ENCODE measurements at regions of chr14 and their contacts with region 1.

Region 1: DNA sequence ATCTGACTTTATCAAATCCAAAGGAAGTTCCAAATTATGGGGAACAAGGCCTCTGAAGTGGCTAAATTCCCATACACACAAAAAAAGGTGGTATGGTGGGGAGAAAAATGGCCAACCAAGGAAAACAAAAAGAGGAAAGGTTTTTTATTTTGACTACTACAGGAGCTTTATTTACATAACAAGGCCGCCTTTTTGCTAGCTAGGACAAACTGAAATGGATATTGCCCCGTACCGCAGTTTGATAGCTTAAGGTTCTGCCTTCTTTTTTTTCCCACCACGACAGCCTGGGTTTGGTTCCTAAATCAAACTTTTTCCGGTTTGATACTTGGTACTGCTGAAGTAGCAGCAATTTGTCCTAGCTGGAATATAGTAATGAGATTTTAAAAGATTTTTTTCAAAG is 66.8 kb downstream of the COX16 start:
- DNase-seq: no peak
- H3K4me3 ChIP-seq: peak overlapping the region in 1 of 4 experiments; percentile 14; a peak in 1 of 8 replicates
- H3K27ac ChIP-seq: peak overlapping the region; percentile 73; the same call in 1 of the 2 replicates
- H3K4me1 ChIP-seq: peaks cover 4 to 20% (median 11%) of the 10 kb centered on the region in 4 experiments; a peak in 6 of 7 replicates
- H3K27me3 ChIP-seq: no peaks in the 10 kb centered on the region
- CTCF ChIP-seq: no peak
- EP300 ChIP-seq: no peak
- POLR2A ChIP-seq: no peak
- RAD21 ChIP-seq: no peak

Region 2: DNA sequence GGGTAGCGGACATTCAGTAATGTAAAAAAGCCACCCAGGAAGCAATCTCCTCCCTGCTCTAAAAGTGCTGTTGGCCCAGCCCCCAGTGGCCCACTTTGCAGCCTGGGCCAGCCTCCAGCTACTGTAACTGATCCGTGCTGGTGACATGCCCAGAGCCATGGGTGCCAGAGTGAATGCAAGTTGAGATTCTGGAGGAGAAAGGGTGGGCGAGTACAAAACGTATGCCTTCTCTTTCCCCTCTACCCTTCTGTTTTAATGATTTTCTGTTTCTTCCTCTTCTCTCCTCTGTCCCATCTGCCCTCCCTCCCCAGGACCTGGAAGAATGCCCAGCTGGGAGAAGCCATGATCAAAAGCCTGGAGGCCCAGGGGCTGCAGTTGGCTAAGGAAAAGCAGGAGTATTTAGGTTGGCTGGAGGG is 791.3 kb before region 1 on chr14:
- CTCF ChIA-PET with region 1: no interaction called
- POLR2A ChIA-PET with region 1: no interaction called
- DNase-seq: no peak
- H3K4me3 ChIP-seq: no peak overlapping the region
- H3K27ac ChIP-seq: no peak overlapping the region
- H3K4me1 ChIP-seq: peaks cover 0 to 5% (median 1%) of the 10 kb centered on the region in 4 experiments; a peak in 2 of 7 replicates
- H3K27me3 ChIP-seq: no peaks in the 10 kb centered on the region; a peak in 1 of 7 replicates
- CTCF ChIP-seq: no peak
- EP300 ChIP-seq: no peak
- POLR2A ChIP-seq: no peak
- RAD21 ChIP-seq: no peak

Region 3: DNA sequence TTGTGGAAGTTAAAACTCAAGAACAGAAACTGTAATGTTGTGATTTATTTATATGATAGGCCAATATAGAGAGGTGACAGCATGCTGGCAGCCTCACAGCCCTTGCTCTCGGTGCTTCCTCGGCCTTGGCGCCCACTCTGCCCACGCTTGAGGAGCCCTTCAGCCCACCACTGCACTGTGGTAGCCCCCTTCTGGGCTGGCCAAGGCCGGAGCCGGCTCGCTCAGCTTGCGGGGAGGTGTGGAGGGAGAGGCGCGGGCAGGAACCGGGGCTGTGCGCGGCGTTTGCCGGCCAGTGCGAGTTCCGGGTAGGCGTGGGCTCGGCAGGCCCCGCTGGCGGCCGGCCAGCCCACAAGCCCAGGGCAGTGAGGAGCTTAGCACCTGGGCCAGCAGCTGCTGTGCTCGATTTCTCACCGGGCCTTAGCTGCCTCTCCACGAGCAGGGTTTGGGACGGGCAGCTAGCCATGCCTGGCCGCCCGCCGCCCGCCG is 38.2 kb before region 1 on chr14:
- CTCF ChIA-PET with region 1: interaction called, 3 read pairs
- POLR2A ChIA-PET with region 1: interaction called, 11 read pairs
- DNase-seq: peak in 1 of 2 experiments; percentile 72
- H3K4me3 ChIP-seq: peak overlapping the region; percentile 49 to 66 (median 54)
- H3K27ac ChIP-seq: peak overlapping the region; percentile 29; the same call in 1 of the 2 replicates
- H3K4me1 ChIP-seq: peaks cover 0 to 3% (median 0%) of the 10 kb centered on the region in 4 experiments; a peak in 3 of 7 replicates
- H3K27me3 ChIP-seq: no peaks in the 10 kb centered on the region
- CTCF ChIP-seq: no peak
- EP300 ChIP-seq: no peak
- POLR2A ChIP-seq: no peak
- RAD21 ChIP-seq: no peak

Region 4: GRCh38 chr14:70281939-70282338 is 10.8 kb before region 1 on chr14:
- CTCF ChIA-PET with region 1: interaction called, 3 read pairs
- POLR2A ChIA-PET with region 1: interaction called, 35 read pairs
- DNase-seq: no peak
- H3K4me3 ChIP-seq: no peak overlapping the region
- H3K27ac ChIP-seq: no peak overlapping the region
- H3K4me1 ChIP-seq: peaks cover 2 to 23% (median 7%) of the 10 kb centered on the region in 4 experiments
- H3K27me3 ChIP-seq: no peaks in the 10 kb centered on the region
- CTCF ChIP-seq: no peak
- EP300 ChIP-seq: no peak
- POLR2A ChIP-seq: no peak
- RAD21 ChIP-seq: no peak